ENCODE measurements at regions of chr19 and their contacts with region 1.

Region 1: DNA sequence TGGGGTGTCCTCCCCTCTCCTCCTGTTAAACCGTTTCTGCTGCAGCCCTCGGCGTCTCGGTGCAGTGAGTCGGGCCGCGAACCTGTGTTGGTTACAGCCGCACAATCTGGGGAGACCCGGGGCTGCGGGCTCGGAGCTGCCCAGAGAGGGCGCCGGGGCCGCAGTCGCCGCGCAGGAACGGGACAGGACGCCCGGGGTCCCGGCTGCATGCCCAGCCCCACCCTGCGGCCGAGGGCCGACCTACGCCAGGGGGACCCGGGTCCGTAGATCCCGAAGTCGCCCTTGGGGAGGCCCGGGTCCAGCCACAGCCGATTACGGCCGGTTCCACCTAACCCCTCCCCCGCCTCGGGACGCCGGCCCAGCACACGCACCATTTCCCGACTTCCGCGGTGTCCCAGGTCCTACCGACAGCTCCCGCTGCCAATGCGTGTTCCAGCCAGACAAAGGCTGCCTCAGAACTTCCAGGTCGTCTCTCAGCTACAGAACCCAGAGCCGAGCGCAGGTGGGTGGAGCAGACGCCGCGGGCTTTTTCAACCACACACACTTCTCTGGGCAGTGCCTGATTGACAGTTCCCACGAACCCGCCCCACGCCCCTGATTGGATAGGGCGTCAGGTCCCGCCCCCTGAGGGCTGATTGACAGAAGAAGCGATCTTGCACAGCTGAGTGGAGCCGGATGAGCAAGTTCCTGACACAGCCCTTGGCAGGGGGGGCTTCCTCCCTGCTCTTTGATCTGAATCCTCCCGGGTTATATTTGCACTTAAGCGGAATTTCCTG is at the start of gene ZNF443:
- DNase-seq: peak; percentile 99
- total RNA-seq, gene ZNF443: 2.8 to 4.6 TPM

Region 2: DNA sequence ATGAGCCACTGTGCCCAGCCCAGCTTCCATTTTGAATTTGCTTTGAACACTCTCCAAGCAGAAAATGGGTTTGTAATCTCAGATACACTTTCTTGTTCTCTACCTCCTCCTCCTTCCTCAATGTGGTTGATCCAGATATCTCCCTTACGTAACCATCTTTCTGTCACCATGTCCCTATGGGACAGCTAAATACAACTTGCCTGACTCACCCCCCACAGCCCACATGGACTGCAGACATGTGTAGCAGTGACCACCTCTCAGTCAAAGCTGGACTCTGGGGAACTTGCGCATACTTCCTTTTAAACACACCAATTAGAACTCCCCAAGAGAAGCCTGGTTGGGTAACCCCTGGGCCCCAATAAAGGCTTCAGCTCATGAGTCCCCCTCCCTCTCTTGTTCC is 28.8 kb before region 1 on chr19:
- intact Hi-C with region 1: loop called in 1 of 2 experiments (anchors 2 kb)
- DNase-seq: no peak